Dendritic cell treated with granulocyte-macrophage colony-stimulating factor and Interleukin-4, amounts not matched to agents 40 ng/mL and 50 ng/mL, for 4 days (primary cell): ENCODE measurements at regions of chr7 and their contacts with region 1.

Region 1: GRCh38 chr7:100081535-100082102 is at the start of gene ZNF3:
- H3K4me3 Mint-ChIP-seq: peak within 1 kb of the TSS; percentile 81
- H3K27ac Mint-ChIP-seq: peak within 1 kb of the TSS; percentile 82
- H3K4me1 Mint-ChIP-seq: peaks cover 54% of the 10 kb centered on the region
- H3K27me3 Mint-ChIP-seq: peaks cover 6% of the 10 kb centered on the region

Region 2: DNA sequence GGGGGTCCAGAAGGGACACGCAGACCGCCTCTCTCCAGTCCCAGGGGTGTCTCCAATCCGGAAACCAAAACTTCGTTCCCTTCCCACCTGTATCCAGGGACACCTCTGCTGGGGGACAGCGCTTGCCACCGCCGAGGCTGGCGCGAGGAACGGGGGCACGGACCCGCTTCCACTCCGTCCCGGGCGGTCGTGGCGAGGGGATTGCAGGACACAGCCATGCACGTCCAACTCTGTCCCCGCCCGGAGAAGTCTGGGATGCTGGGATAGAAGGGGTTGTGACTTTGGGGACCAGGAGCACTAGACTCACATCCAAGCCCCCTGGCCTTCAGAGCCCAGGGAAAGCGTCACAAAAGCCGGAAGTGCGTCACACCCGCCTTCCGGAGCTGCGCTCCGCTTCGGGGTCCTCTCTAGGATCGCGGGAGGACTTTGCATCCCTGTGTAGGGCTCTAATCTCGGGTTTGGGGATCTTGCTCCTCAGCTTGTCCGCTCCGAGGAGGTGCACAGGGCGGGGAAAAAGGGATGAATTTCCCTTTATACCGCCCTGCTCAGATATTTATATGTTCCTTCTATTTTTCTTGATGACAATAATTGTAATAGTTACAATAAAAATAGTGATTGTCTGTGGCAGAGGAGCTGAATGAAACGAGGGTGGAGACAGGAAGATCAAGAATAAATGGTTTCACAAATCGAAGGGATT is 529.7 kb before region 1 on chr7 and contains the start of gene FAM200A:
- intact Hi-C with region 1: loop called (anchors 10 kb)
- H3K4me3 Mint-ChIP-seq: peak within 1 kb of the TSS; percentile 86
- H3K27ac Mint-ChIP-seq: peak within 1 kb of the TSS; percentile 92
- H3K4me1 Mint-ChIP-seq: peaks cover 39% of the 10 kb centered on the region
- H3K27me3 Mint-ChIP-seq: no peaks in the 10 kb centered on the region

Region 3: GRCh38 chr7:100015232-100016209 is 66.1 kb before region 1 on chr7 and contains the start of gene ZKSCAN1:
- intact Hi-C with region 1: loop called (anchors 10 kb)
- H3K4me3 Mint-ChIP-seq: peak within 1 kb of the TSS; percentile 81
- H3K27ac Mint-ChIP-seq: peak within 1 kb of the TSS; percentile 91
- H3K4me1 Mint-ChIP-seq: peaks cover 47% of the 10 kb centered on the region
- H3K27me3 Mint-ChIP-seq: no peaks in the 10 kb centered on the region

Region 4: GRCh38 chr7:100101016-100101862 is 19.6 kb after region 1 on chr7 and contains the starts of genes AP4M1 and MCM7:
- intact Hi-C with region 1: loop called (anchors 2 kb)
- H3K4me3 Mint-ChIP-seq: peak within 1 kb of the TSS; percentile 93
- H3K27ac Mint-ChIP-seq: peak within 1 kb of the TSS; percentile 98
- H3K4me1 Mint-ChIP-seq: peaks cover 30% of the 10 kb centered on the region
- H3K27me3 Mint-ChIP-seq: no peaks in the 10 kb centered on the region

Region 5: GRCh38 chr7:100126931-100127865 is 45.6 kb after region 1 on chr7 and contains the start of gene MBLAC1:
- intact Hi-C with region 1: loop called (anchors 2 kb)
- H3K4me3 Mint-ChIP-seq: peak within 1 kb of the TSS; percentile 98
- H3K27ac Mint-ChIP-seq: peak within 1 kb of the TSS; percentile 99
- H3K4me1 Mint-ChIP-seq: peaks cover 48% of the 10 kb centered on the region
- H3K27me3 Mint-ChIP-seq: peaks cover 17% of the 10 kb centered on the region